ENCODE measurements at regions of chr1 and their contacts with region 1.

Region 1: DNA sequence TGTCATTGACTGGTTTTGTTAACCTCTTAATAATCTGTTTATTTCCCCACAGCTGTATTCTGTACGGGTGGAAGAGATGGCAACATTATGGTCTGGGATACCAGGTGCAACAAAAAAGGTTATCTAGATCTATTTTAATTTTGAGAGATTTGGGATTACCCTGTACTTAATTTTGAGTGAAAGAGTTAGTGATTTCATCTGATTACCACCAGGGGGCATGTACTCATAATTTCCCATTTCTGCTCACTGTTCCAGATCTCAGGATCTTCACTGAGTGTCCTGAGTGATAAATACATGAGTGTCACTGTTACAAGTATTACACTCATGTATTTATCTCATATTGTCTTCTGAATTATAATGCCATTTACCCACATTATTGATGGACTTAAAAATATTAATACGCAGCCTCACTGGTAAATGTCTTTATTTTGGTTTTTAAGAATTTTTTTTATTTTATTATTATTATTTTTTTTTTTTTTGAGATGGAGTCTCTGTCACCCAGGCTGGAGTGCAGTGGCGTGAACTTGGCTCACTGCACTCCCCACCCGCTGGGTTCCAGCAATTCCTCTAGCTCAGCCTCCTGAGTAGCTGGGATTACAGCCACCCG is 27.4 kb downstream of the DTL start:
- DNase-seq: no peak
- H3K4me3 ChIP-seq: no peak overlapping the region
- H3K27ac ChIP-seq: no peak overlapping the region
- H3K4me1 ChIP-seq: no peaks in the 10 kb centered on the region
- H3K27me3 ChIP-seq: no peaks in the 10 kb centered on the region
- CTCF ChIP-seq: peak; percentile 48 to 72 (median 56)
- POLR2A ChIP-seq: no peak

Region 2: DNA sequence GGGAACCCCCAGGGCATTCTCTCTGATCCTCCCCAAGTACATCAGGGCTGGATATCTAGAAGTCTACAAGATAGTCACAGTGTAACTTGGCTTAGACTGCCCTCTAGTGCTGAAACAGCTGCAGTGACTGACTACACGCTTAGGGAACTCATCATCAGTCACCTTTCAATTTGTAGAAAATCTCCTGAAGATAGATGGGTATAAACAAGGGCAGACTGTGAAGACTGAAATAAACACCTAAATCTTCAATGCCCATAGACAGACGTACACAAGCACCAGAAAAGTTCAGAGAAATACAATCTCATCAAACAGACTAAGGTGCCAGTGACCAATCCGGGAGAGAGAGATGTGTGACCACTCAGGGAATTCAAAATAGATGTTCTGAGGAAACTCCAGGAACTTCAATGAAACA is 305.1 kb after region 1 on chr1:
- intact Hi-C with region 1: loop called (anchors 5 kb)
- DNase-seq: peak; percentile 62
- H3K4me3 ChIP-seq: no peak overlapping the region
- H3K27ac ChIP-seq: no peak overlapping the region
- H3K4me1 ChIP-seq: no peaks in the 10 kb centered on the region
- H3K27me3 ChIP-seq: no peaks in the 10 kb centered on the region
- CTCF ChIP-seq: peak in 2 of 3 experiments; percentile 44 to 63
- POLR2A ChIP-seq: no peak

Region 3: DNA sequence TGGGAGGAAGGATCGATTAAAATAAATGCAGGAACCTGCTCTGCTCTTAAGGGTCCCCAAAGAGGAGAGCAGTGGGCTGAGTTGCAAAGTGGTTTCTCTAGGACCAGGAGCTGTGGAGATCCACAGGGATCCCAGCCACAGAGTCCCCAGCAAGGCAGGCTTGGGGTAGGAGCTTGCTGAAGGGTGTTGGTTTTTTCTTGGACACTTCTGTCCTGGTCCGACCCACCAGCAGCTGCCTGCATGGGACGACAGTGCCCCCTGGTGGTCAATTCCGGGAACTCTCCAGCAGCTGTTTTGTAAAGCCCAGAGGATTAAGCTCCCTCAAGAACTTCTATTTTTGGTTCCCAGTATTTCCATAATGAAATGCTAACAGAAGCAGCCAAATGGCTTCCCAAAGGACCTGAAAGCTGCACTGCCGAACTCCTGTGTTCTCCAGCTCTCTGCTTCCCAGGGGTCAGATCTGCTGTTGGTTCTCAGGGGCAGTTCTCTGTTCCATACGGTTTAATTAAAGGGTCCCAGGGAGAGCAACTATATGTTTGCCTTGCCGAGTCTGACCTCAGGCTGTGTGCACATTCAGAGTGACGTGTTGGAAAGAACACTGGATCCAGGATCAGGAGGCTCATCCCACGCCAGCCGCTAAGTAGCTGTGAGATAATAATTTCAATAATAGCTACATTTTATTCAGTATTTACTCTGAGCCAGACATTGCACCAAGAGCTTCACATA is 393.0 kb after region 1 on chr1:
- intact Hi-C with region 1: loop called (anchors 5 kb)
- DNase-seq: peak; percentile 95
- H3K4me3 ChIP-seq: no peak overlapping the region
- H3K27ac ChIP-seq: no peak overlapping the region
- H3K4me1 ChIP-seq: no peaks in the 10 kb centered on the region
- H3K27me3 ChIP-seq: no peaks in the 10 kb centered on the region
- CTCF ChIP-seq: peak; percentile 97 to 100 (median 98)
- POLR2A ChIP-seq: no peak